Common myeloid progenitor, CD34-positive (primary cell): ENCODE measurements at regions of chr14 and their contacts with region 1.

Region 1: GRCh38 chr14:34331728-34332623 is 130.1 kb downstream of the SPTSSA start:
- DNase-seq: peak; percentile 37 to 56 (median 42)
- H3K4me3 ChIP-seq: no peak overlapping the region
- H3K27ac ChIP-seq: no peak overlapping the region
- H3K4me1 ChIP-seq: no peaks in the 10 kb centered on the region
- H3K27me3 ChIP-seq: no peaks in the 10 kb centered on the region

Region 2: GRCh38 chr14:34003082-34003668 is 328.8 kb before region 1 on chr14:
- CTCF ChIA-PET with region 1: no interaction called
- POLR2A ChIA-PET with region 1: no interaction called
- DNase-seq: no peak
- H3K4me3 ChIP-seq: no peak overlapping the region
- H3K27ac ChIP-seq: no peak overlapping the region
- H3K4me1 ChIP-seq: peaks cover 0 to 17% (median 4%) of the 10 kb centered on the region in 4 experiments
- H3K27me3 ChIP-seq: no peaks in the 10 kb centered on the region

Region 3: GRCh38 chr14:34496679-34497513 is 164.9 kb after region 1 on chr14:
- CTCF ChIA-PET with region 1: interaction called, 54 read pairs
- POLR2A ChIA-PET with region 1: no interaction called
- DNase-seq: no peak
- H3K4me3 ChIP-seq: no peak overlapping the region
- H3K27ac ChIP-seq: no peak overlapping the region
- H3K4me1 ChIP-seq: no peaks in the 10 kb centered on the region
- H3K27me3 ChIP-seq: no peaks in the 10 kb centered on the region

Region 4: DNA sequence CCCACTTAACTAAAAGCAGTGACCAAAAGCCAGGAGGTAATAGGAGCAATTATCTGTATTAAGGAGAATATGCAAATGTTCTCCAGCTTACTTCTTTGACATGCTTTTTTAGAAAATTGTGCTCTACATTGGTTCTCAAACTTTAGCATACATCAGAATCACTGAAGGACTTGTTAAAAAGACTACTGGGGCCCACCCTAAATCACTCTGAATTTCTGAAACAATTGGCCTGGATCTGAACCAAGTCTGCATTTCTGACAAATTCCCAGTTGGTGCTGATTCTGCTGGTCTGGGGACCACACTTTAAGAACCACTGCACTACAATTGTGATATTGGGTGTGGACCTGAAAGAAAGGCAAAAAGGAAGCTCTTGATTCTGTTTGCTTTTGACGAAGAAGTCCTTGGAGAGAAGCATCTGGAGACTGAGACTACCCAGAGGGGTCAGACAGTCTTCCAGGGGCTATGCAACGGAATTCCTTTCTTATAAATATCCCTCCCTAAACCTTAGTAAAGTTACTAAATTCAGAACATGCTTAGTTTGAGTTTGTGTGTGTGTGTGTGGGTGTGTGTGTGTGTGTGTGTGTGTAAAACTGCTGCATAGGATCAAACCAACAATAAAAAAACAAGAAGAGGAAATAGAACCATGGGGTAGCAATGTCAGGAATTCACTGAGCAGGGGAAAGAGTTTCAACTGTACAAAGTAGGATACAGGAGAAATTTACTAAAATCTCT is 170.7 kb after region 1 on chr14:
- CTCF ChIA-PET with region 1: interaction called, 54 read pairs
- POLR2A ChIA-PET with region 1: no interaction called
- DNase-seq: no peak
- H3K4me3 ChIP-seq: no peak overlapping the region
- H3K27ac ChIP-seq: no peak overlapping the region
- H3K4me1 ChIP-seq: no peaks in the 10 kb centered on the region
- H3K27me3 ChIP-seq: no peaks in the 10 kb centered on the region